Esophagus muscularis mucosa (tissue), 4 donors: ENCODE measurements at regions of chr9 and their contacts with region 1.

Region 1: GRCh38 chr9:108272349-108272899 is 583.4 kb downstream of the ACTL7B start:
- DNase-seq: no peak
- H3K4me3 ChIP-seq: peak overlapping the region in 3 of 4 donors; percentile 6 to 38 (median 17)
- H3K27ac ChIP-seq: peak overlapping the region; percentile 2 to 48 (median 32)
- H3K4me1 ChIP-seq: peaks cover 5 to 13% (median 11%) of the 10 kb centered on the region in 4 donors
- H3K27me3 ChIP-seq: no peaks in the 10 kb centered on the region
- CTCF ChIP-seq: peak; percentile 57 to 61 (median 61)
- EP300 ChIP-seq: no peak
- POLR2A ChIP-seq: no peak

Region 2: DNA sequence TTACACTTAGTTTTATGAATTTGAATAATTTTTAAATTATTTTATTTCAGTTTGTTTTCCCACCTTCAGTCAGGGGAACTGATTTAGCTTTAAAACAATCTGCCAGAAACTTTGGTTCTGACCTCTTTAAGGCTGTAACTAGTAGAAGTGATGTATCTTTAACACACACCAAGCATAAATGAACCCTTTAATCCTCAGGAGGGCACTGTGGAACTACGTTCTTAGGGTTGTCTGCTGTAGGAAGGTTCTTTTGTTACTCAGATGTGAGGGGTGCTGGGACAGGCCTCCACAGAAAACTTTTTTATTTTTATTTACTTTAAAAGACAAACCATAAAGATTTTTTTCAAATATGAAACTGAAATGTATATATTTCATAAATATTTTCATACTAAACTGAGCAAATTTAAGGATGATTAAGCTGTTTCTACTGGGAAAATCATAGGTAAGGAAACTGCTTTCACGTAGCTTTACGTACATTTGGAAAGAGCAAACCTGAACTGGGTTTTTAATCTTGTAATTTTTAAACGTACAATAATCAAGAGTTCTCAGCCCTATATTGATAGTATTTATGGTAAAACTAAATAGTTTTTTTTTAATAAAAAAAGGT is 788.2 kb before region 1 on chr9:
- intact Hi-C with region 1: loop called (anchors 5 kb)
- DNase-seq: no peak
- H3K4me3 ChIP-seq: peak overlapping the region; percentile 80 to 94 (median 88)
- H3K27ac ChIP-seq: peak overlapping the region; percentile 33 to 95 (median 66)
- H3K4me1 ChIP-seq: peaks cover 6 to 47% (median 40%) of the 10 kb centered on the region in 4 donors
- H3K27me3 ChIP-seq: no peaks in the 10 kb centered on the region
- CTCF ChIP-seq: peak; percentile 48 to 75 (median 62)
- EP300 ChIP-seq: no peak
- POLR2A ChIP-seq: no peak

Region 3: GRCh38 chr9:107644733-107645463 is 627.5 kb before region 1 on chr9:
- intact Hi-C with region 1: loop called (anchors 5 kb)
- DNase-seq: no peak
- H3K4me3 ChIP-seq: no peak overlapping the region
- H3K27ac ChIP-seq: peak overlapping the region in 3 of 4 donors; percentile 2 to 30 (median 6)
- H3K4me1 ChIP-seq: peaks cover 0 to 13% (median 6%) of the 10 kb centered on the region in 4 donors
- H3K27me3 ChIP-seq: no peaks in the 10 kb centered on the region
- CTCF ChIP-seq: no peak
- EP300 ChIP-seq: no peak
- POLR2A ChIP-seq: no peak

Region 4: GRCh38 chr9:107976765-107977164 is 295.7 kb before region 1 on chr9:
- intact Hi-C with region 1: no loop called
- DNase-seq: no peak
- H3K4me3 ChIP-seq: no peak overlapping the region
- H3K27ac ChIP-seq: peak overlapping the region in 1 of 4 donors; percentile 53
- H3K4me1 ChIP-seq: no peaks in the 10 kb centered on the region
- H3K27me3 ChIP-seq: no peaks in the 10 kb centered on the region
- CTCF ChIP-seq: no peak
- EP300 ChIP-seq: no peak
- POLR2A ChIP-seq: no peak